Common myeloid progenitor, CD34-positive (primary cell): ENCODE measurements at regions of chr2 and their contacts with region 1.

Region 1: DNA sequence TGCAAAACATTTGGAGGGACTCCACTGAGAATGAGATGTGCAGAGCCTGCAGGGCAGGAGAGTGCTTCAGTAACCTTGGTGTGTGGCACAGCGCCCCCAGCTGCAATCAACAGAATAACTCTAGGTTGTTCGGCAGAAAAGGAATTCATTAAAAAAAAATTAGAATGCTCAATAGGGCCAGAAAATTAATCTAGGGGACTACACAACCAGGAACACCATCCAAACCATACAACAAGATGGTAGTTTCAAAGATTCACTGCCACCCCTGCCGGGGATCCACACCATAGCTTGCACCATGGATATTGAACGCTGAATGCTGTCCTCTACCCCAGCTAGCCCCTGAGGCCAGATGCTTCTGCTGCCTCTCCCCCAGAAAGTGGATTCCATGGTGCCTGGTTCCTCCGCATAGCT is 50.1 kb downstream of the THUMPD2 start:
- DNase-seq: peak; percentile 48 to 72 (median 72)
- H3K4me3 ChIP-seq: no peak overlapping the region
- H3K27ac ChIP-seq: no peak overlapping the region
- H3K4me1 ChIP-seq: peaks cover 1 to 13% (median 9%) of the 10 kb centered on the region in 4 experiments
- H3K27me3 ChIP-seq: no peaks in the 10 kb centered on the region

Region 2: DNA sequence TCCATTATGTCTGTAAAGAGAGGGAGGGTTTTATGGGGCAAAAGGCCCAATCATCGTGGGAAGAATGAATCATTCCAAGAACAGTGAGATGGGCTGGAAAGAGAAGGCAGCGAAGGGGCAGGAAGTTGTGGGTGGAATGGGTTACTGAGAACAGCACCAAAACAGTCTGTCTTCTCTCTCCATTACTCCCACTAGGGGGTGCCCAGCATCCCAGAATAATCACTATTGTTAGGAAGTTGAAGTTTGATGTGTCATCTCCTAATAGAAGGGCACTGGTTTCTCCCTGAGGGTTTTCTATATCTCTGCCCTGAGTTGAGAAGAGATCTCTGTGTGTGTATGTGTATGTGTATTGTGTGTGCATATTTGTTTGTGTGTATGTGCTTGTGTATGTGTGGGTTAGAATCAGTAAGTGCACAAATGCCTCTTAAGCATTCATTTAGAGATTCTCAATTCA is 215.3 kb before region 1 on chr2:
- CTCF ChIA-PET with region 1: interaction called, 12 read pairs
- POLR2A ChIA-PET with region 1: no interaction called
- DNase-seq: peak; percentile 68 to 70 (median 69)
- H3K4me3 ChIP-seq: no peak overlapping the region
- H3K27ac ChIP-seq: peak overlapping the region in 1 of 2 experiments; percentile 67
- H3K4me1 ChIP-seq: peaks cover 17 to 54% (median 36%) of the 10 kb centered on the region in 4 experiments
- H3K27me3 ChIP-seq: no peaks in the 10 kb centered on the region

Region 3: DNA sequence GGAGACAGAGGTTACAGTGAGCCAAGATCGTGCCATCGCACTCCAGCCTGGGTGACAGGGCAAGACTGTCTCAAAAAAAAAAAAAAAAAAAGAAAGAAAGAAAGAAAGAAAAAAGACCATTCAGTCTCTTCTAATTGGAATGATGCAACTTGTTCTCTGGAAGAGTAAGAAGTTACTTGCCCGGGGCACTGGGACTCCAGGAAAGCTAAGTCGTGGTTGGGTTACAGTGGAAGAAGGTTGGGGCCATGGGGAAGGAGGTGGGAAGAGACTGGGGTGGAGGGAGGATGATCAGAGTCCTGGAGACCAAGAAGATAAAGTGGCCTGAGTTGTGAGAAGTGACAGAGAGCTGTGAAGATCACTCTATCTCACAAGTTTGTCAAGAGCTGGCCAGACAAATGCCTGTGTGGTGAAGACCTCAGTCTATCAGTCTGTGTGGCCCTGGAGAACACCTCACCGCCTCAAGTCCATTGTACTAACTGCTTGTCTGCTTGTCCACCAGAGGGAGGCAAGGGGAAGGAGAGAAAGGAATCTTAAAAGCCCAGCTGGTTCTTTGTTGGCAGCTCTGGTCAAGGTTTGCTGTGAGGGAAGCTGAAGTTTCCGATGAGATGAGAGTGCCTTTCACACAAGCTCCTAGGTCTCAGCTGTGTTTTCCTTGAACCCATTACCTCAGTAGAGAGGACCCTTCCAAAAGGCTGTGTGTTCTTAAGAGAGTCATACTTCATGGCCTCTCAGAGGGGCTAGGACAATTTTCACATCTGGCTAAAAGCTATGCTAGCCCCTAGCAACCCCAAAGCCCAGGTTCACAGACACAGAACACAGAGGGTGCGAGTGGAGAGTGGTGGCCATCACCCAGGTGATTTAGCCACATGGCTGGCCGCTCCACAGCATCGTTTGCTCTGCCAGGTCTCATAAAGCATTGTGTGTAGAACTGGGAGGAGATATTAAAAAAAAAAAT is 135.2 kb before region 1 on chr2:
- CTCF ChIA-PET with region 1: interaction called, 81 read pairs
- POLR2A ChIA-PET with region 1: interaction called, 3 read pairs
- DNase-seq: peak; percentile 65 to 77 (median 77)
- H3K4me3 ChIP-seq: no peak overlapping the region
- H3K27ac ChIP-seq: no peak overlapping the region
- H3K4me1 ChIP-seq: peaks cover 0 to 2% (median 0%) of the 10 kb centered on the region in 4 experiments
- H3K27me3 ChIP-seq: no peaks in the 10 kb centered on the region

Region 4: DNA sequence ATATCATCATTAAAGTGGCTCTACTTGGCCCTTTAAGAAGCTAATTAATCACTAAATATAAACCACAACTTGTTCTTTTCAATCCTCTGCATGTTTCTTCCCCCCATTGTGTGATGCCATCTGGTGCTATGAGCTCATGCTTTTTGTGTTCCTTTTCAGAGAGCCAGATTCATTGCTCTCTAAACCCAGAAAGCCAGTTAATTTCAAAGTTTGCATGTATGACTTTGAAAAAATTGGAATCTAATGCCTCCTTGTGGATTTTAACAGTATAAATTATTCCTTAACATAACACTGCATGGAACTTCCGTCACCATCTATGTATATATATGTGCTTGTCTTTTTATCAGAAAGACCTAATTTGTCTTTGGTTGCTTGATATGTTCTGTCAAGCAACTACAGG is 32.1 kb before region 1 on chr2:
- CTCF ChIA-PET with region 1: interaction called, 18 read pairs
- POLR2A ChIA-PET with region 1: no interaction called
- DNase-seq: peak; percentile 22 to 52 (median 46)
- H3K4me3 ChIP-seq: no peak overlapping the region
- H3K27ac ChIP-seq: no peak overlapping the region
- H3K4me1 ChIP-seq: no peaks in the 10 kb centered on the region
- H3K27me3 ChIP-seq: peaks cover 0 to 2% (median 0%) of the 10 kb centered on the region in 5 experiments

Region 5: DNA sequence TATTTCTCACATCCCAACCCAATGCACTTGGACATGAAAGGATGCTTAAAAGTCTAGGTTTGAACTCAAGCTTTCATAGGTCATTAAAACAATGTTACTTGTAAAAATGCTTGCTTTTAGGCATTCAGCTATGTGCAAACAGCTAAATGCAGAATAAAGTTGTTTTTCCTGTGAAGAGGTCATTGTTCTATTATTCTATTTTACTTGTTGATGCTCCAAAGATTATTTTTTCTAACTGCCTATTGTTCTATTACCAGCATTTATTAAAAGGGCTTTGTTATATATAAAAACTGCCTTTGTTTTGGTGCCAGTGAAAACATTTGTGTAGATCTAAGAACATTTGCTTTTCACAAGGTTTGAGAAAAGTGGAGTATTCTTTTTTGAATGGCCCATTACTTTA is 13.9 kb before region 1 on chr2:
- CTCF ChIA-PET with region 1: interaction called, 18 read pairs
- POLR2A ChIA-PET with region 1: no interaction called
- DNase-seq: no peak
- H3K4me3 ChIP-seq: no peak overlapping the region
- H3K27ac ChIP-seq: no peak overlapping the region
- H3K4me1 ChIP-seq: no peaks in the 10 kb centered on the region
- H3K27me3 ChIP-seq: no peaks in the 10 kb centered on the region

Region 6: GRCh38 chr2:39743269-39743776 is 14.4 kb after region 1 on chr2:
- CTCF ChIA-PET with region 1: interaction called, 46 read pairs
- POLR2A ChIA-PET with region 1: no interaction called
- DNase-seq: no peak
- H3K4me3 ChIP-seq: no peak overlapping the region
- H3K27ac ChIP-seq: no peak overlapping the region
- H3K4me1 ChIP-seq: no peaks in the 10 kb centered on the region
- H3K27me3 ChIP-seq: no peaks in the 10 kb centered on the region

Region 7: DNA sequence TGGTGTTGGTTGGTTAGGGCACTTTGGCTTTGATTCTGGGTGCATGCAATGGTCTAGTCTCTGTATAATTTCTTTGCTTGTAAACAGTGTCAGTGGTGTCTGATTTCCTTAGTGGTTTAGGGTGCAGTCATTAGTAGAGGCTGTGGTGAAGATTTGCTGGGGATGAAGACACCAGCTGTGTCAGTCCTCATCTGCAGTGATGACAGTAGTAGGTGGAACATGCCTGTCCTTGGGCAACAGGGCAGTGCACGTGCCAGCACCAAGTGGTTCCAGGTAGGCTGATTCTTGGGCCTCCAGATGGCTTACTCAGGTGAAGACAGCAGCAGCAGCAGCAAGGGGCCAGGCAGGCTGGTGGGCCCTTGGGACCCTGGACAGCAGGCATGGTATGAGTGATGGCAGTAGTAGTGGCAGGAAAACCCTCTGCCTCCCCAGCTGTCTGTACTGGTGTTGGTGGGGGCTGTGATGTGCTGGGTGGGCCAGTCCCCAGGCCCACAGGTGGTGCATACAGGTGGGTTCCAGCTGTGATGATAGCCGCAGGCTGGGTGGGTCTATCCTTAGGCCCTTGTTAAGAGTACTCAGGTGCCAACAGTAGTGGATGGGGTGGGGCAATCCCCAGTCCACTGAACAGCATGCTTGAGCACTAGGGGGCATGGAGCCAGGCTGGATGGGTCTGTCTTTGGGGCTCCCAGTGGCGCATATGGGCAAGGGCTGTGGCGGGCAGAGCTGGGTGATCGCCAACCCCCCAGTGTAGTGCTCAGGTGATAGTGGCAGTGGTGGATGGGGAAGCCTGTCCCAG is 190.8 kb after region 1 on chr2:
- CTCF ChIA-PET with region 1: no interaction called
- POLR2A ChIA-PET with region 1: no interaction called
- DNase-seq: peak in 1 of 3 donors; percentile 1
- H3K4me3 ChIP-seq: no peak overlapping the region
- H3K27ac ChIP-seq: no peak overlapping the region
- H3K4me1 ChIP-seq: peaks cover 0 to 2% (median 0%) of the 10 kb centered on the region in 4 experiments
- H3K27me3 ChIP-seq: no peaks in the 10 kb centered on the region

Region 8: GRCh38 chr2:40773291-40773690 is 1044.3 kb after region 1 on chr2:
- CTCF ChIA-PET with region 1: no interaction called
- POLR2A ChIA-PET with region 1: interaction called, 11 read pairs
- DNase-seq: no peak
- H3K4me3 ChIP-seq: no peak overlapping the region
- H3K27ac ChIP-seq: no peak overlapping the region
- H3K4me1 ChIP-seq: no peaks in the 10 kb centered on the region
- H3K27me3 ChIP-seq: no peaks in the 10 kb centered on the region